Natural killer cell (primary cell): ENCODE measurements at regions of chr11 and their contacts with region 1.

Region 1: DNA sequence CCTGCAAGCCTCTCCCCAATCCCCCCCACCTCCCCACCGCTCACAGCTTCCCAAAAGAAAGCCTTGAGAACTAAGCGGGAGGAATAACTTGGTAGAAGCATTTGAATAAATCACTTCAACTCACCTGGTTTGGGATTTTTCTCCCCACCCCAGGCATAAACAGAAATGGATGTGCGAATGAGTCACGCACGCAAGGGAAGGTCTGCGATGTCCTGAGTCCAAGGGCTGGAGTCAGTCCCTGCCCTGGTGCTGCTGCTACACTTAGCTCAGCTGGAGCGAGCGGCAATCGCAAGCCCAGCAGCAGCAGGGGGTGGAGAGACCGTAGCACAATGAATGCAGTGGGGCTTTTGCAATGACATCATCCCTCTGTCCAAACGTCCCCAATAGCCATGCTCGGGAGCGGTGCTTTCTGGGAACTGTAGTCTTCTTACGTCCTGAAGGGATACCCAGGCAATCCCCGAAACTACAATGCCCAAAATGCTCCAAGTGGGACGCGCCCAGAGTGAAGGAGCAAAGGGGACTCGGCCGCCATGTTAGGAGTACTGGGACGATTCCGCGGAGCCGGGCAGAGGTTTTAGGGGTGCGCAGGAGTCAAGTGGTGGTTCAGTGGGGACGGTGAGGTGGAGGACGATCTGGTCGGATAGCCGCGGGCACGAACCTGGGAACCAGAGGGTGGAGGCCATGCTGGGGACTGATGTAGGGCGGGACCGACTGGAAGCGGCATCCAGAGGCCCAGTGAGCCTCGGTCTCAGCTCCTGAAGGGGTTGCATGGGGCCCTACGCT is at the start of gene RAB30:
- DNase-seq: peak; percentile 83 to 99
- ATAC-seq: peak; percentile 93 to 99 (median 95)
- H3K4me3 ChIP-seq: peak within 1 kb of the TSS; percentile 78
- H3K4me3 Mint-ChIP-seq: no peak within 1 kb of the TSS
- H3K27ac ChIP-seq: peak within 1 kb of the TSS; percentile 90
- H3K27ac Mint-ChIP-seq: no peak within 1 kb of the TSS
- H3K4me1 ChIP-seq: peaks cover 22% of the 10 kb centered on the region
- H3K4me1 Mint-ChIP-seq: peaks cover 6 to 11% of the 10 kb centered on the region in 2 donors
- H3K27me3 ChIP-seq: no peaks in the 10 kb centered on the region
- H3K27me3 Mint-ChIP-seq: peaks cover 8 to 10% of the 10 kb centered on the region in 2 donors
- CTCF ChIP-seq: no peak
- total RNA-seq, gene RAB30: 10.2 to 23.3 (median 20.5) TPM

Region 2: DNA sequence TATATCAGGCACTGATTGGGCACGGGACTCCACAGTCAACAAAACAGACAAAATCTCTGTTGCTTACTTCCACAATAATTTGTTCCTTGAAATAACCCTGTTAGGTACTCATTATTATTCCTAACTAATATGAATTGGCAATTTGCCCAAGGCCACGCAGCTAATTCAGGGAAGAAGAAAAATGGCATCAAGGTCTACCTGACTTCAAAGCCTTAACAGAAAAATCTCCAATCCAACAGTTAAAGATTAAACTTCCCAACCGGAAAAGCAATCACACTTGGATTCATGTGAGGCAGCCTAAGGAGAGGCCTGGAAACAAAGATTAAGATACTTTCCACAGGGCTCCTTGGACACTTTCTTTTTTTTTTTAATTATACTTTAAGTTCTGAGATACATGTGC is 240.4 kb before region 1 on chr11:
- intact Hi-C with region 1: no loop called
- DNase-seq: no peak
- ATAC-seq: no peak
- H3K4me3 ChIP-seq: no peak overlapping the region
- H3K4me3 Mint-ChIP-seq: no peak overlapping the region
- H3K27ac ChIP-seq: no peak overlapping the region
- H3K27ac Mint-ChIP-seq: no peak overlapping the region
- H3K4me1 ChIP-seq: no peaks in the 10 kb centered on the region
- H3K4me1 Mint-ChIP-seq: no peaks in the 10 kb centered on the region
- H3K27me3 ChIP-seq: no peaks in the 10 kb centered on the region
- H3K27me3 Mint-ChIP-seq: no peaks in the 10 kb centered on the region
- CTCF ChIP-seq: no peak

Region 3: DNA sequence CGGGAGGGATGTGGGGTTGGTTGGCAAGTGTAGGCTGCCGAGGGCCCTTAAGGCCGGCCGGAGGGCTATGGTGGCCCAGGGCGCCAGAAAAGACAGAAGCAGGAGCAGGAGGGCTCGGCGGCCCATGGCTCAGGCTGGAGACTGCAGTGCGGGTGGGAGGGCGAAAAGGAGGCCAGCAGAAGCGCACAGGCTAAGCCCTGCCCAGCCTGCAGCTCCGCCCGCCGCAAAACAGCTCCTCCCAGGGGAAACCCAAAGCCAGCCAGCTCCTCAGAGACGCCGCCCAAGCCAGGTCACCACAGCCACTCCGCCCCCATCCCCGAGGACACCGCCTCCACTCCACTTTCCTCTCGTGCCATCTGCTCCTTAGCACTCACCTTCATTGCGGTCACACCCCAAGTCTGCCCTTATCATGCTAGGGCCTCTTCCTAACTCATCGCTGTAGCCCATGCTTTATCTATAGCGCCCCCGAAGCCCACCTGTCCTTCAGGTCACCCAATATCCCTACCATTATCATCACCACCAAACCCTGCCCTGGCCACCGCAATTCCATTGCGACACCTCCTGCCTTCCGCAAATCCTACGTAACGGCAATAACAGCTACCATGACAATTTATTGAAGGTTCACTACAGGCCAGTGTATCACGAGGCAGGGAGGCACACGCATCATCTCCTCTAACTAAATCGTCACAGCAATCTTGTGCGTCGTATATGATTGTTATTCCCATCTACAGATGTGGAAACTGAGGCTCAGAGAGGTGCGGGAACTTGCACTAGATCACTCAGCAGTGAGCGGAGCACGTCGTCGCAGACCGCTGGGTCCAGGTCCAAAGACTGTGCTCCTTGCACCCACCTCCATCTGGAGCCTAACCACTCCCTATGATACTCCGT is 171.2 kb before region 1 on chr11 and contains the start of gene PRCP:
- intact Hi-C with region 1: loop called (anchors 1 kb)
- DNase-seq: peak; percentile 91 to 95
- ATAC-seq: peak; percentile 75 to 90 (median 79)
- H3K4me3 ChIP-seq: peak within 1 kb of the TSS; percentile 94
- H3K4me3 Mint-ChIP-seq: peak within 1 kb of the TSS; percentile 98
- H3K27ac ChIP-seq: peak within 1 kb of the TSS; percentile 99
- H3K27ac Mint-ChIP-seq: peak within 1 kb of the TSS; percentile 97 to 99
- H3K4me1 ChIP-seq: peaks cover 32% of the 10 kb centered on the region
- H3K4me1 Mint-ChIP-seq: peaks cover 50 to 59% of the 10 kb centered on the region in 2 donors
- H3K27me3 ChIP-seq: no peaks in the 10 kb centered on the region
- H3K27me3 Mint-ChIP-seq: no peaks in the 10 kb centered on the region
- CTCF ChIP-seq: no peak
- total RNA-seq, gene PRCP: 28.1 to 30.0 (median 30.0) TPM

Region 4: DNA sequence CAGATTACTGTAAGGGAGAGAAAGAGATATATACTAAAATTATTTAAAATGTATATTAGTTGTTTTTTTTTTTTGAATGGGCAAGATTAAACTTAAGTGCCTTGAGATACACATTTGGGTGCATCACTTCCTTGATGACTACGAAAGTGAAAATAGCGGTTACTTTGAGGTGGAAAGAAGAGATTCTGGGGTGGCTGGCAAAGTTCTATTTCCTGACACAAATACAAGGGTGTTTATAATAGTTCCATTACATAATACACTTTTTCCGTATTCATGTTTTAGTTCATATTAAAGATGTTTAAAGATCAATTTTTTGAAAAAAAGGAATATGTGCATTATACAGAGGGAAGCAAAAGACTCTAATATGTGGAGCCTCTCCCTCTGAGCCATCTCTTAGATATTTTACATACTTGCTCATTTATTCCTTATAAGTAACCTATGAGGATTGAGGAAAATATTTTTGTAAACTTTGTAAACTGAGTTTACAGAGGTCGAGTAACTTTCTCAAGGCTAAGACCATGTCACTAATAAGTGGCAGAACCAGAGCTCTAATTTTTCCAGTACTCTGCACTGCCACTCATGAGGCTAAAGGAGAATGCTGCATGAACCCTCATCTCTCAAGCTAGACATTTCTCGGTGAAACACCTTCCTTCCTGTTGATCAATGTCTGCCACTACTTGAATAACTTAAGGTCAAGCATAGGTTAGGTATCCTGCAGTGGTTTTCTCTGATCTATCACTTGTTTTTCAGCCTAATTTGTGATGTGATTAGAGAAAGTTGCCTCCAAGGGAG is 111.6 kb before region 1 on chr11:
- intact Hi-C with region 1: loop called (anchors 1 kb)
- DNase-seq: peak in 1 of 2 donors; percentile 85
- ATAC-seq: peak; percentile 76 to 86 (median 86)
- H3K4me3 ChIP-seq: peak overlapping the region; percentile 2
- H3K4me3 Mint-ChIP-seq: peak overlapping the region; percentile 83
- H3K27ac ChIP-seq: peak overlapping the region; percentile 91
- H3K27ac Mint-ChIP-seq: peak overlapping the region; percentile 92 to 97
- H3K4me1 ChIP-seq: peaks cover 41% of the 10 kb centered on the region
- H3K4me1 Mint-ChIP-seq: peaks cover 62 to 71% of the 10 kb centered on the region in 2 donors
- H3K27me3 ChIP-seq: no peaks in the 10 kb centered on the region
- H3K27me3 Mint-ChIP-seq: no peaks in the 10 kb centered on the region
- CTCF ChIP-seq: no peak

Region 5: DNA sequence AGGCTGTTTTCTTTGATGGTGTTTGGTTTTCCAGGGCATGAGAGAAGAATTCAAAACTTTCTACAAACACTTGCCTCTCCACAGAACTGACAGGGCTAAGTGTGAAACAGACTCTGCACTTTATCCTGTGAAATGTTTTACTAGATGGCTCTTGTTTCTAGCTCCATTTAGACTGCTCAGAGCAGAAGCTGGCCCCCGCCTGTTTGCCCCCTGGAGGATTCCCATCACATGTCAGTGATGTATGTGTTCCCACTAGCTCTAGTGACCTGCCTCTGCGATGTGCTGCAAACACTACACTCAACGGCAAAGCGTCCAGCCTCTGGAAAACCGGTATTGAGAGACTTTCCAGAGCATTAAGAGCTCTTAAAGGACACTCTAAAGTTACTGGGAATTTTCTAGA is 43.8 kb after region 1 on chr11:
- intact Hi-C with region 1: loop called (anchors 2 kb)
- DNase-seq: peak in 1 of 2 donors; percentile 9
- ATAC-seq: peak in 1 of 3 donors; percentile 26
- H3K4me3 ChIP-seq: no peak overlapping the region
- H3K4me3 Mint-ChIP-seq: peak overlapping the region; percentile 76
- H3K27ac ChIP-seq: no peak overlapping the region
- H3K27ac Mint-ChIP-seq: peak overlapping the region; percentile 66 to 83
- H3K4me1 ChIP-seq: peaks cover 27% of the 10 kb centered on the region
- H3K4me1 Mint-ChIP-seq: peaks cover 30 to 31% of the 10 kb centered on the region in 2 donors
- H3K27me3 ChIP-seq: no peaks in the 10 kb centered on the region
- H3K27me3 Mint-ChIP-seq: no peaks in the 10 kb centered on the region
- CTCF ChIP-seq: no peak

Region 6: DNA sequence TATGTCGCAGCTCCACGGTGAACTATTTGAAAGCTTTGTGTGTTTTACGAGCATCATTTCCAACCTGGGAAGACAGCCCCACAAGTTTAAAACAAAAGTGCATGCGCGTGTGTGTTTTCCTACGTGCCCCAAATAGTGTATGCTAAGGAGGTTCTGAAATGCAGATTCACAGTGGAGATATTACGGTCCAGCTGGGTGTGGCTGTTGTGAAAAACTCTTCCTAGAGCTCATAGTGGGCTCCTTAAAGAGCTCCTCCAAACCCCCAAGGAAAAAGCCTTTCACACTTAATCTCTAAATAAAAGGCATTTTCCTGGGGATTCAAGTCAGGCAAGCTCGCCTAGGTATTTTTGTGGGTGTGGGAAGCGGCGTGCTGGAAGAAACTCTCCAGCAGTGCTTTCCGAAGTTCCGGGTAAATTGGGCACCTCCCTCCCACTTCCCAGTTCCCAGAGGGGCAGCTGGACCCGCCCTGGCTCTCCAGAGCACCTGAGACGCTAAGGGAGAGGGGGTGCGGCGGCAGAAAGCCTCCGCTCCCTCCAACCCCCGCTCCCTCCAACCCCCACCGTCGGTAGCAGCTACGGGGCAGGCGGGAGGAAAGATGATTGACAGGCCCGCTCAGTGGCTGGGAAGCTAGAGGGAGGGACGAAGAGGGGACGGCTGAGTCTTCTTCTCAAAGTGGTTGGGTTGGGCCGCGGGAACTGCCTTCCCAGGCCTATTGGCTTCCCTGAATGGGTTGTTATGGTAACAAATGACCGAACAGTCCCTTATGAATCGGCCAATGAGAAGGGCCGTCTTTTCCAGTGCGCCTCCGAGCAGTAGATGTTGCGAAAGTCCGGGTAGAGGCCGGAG is 84.6 kb after region 1 on chr11:
- intact Hi-C with region 1: loop called (anchors 1 kb)
- DNase-seq: peak; percentile 93 to 100
- ATAC-seq: peak; percentile 83 to 95 (median 87)
- H3K4me3 ChIP-seq: peak overlapping the region; percentile 68
- H3K4me3 Mint-ChIP-seq: peak overlapping the region; percentile 95
- H3K27ac ChIP-seq: peak overlapping the region; percentile 91
- H3K27ac Mint-ChIP-seq: peak overlapping the region; percentile 99 to 100
- H3K4me1 ChIP-seq: peaks cover 15% of the 10 kb centered on the region
- H3K4me1 Mint-ChIP-seq: peaks cover 30 to 33% of the 10 kb centered on the region in 2 donors
- H3K27me3 ChIP-seq: no peaks in the 10 kb centered on the region
- H3K27me3 Mint-ChIP-seq: no peaks in the 10 kb centered on the region
- CTCF ChIP-seq: no peak

Region 7: GRCh38 chr11:83193315-83194280 is 121.8 kb after region 1 on chr11 and contains the start of gene ANKRD42:
- intact Hi-C with region 1: loop called (anchors 1 kb)
- DNase-seq: peak; percentile 79 to 96
- ATAC-seq: peak; percentile 62 to 81 (median 72)
- H3K4me3 ChIP-seq: peak within 1 kb of the TSS; percentile 83
- H3K4me3 Mint-ChIP-seq: peak within 1 kb of the TSS; percentile 100
- H3K27ac ChIP-seq: peak within 1 kb of the TSS; percentile 97
- H3K27ac Mint-ChIP-seq: peak within 1 kb of the TSS; percentile 98 to 100
- H3K4me1 ChIP-seq: peaks cover 11% of the 10 kb centered on the region
- H3K4me1 Mint-ChIP-seq: peaks cover 50 to 51% of the 10 kb centered on the region in 2 donors
- H3K27me3 ChIP-seq: no peaks in the 10 kb centered on the region
- H3K27me3 Mint-ChIP-seq: no peaks in the 10 kb centered on the region
- CTCF ChIP-seq: no peak
- total RNA-seq, gene ANKRD42: 10.4 to 13.3 (median 11.6) TPM

Region 8: GRCh38 chr11:83285771-83286528 is 214.2 kb after region 1 on chr11 and contains the start of gene CCDC90B:
- intact Hi-C with region 1: loop called (anchors 1 kb)
- DNase-seq: peak; percentile 90 to 98
- ATAC-seq: peak; percentile 89 to 96 (median 89)
- H3K4me3 ChIP-seq: peak within 1 kb of the TSS; percentile 81
- H3K4me3 Mint-ChIP-seq: peak within 1 kb of the TSS; percentile 96
- H3K27ac ChIP-seq: peak within 1 kb of the TSS; percentile 97
- H3K27ac Mint-ChIP-seq: peak within 1 kb of the TSS; percentile 99 to 100
- H3K4me1 ChIP-seq: peaks cover 4% of the 10 kb centered on the region
- H3K4me1 Mint-ChIP-seq: peaks cover 21 to 26% of the 10 kb centered on the region in 2 donors
- H3K27me3 ChIP-seq: no peaks in the 10 kb centered on the region
- H3K27me3 Mint-ChIP-seq: peaks cover 0 to 8% of the 10 kb centered on the region in 2 donors
- CTCF ChIP-seq: no peak
- total RNA-seq, gene CCDC90B: 27.3 to 30.2 (median 29.5) TPM

Region 9: GRCh38 chr11:83694191-83694910 is 622.6 kb after region 1 on chr11:
- intact Hi-C with region 1: no loop called
- DNase-seq: no peak
- ATAC-seq: no peak
- H3K4me3 ChIP-seq: no peak overlapping the region
- H3K4me3 Mint-ChIP-seq: no peak overlapping the region
- H3K27ac ChIP-seq: no peak overlapping the region
- H3K27ac Mint-ChIP-seq: no peak overlapping the region
- H3K4me1 ChIP-seq: no peaks in the 10 kb centered on the region
- H3K4me1 Mint-ChIP-seq: no peaks in the 10 kb centered on the region
- H3K27me3 ChIP-seq: no peaks in the 10 kb centered on the region
- H3K27me3 Mint-ChIP-seq: no peaks in the 10 kb centered on the region
- CTCF ChIP-seq: no peak